IMR-90 (cell line): ENCODE measurements at regions of chrX and their contacts with region 1.

Region 1: GRCh38 chrX:100685284-100685996 is 41.4 kb downstream of the SRPX2 start:
- DNase-seq: peak; percentile 75
- ATAC-seq: peak; percentile 90
- H3K4me3 ChIP-seq: no peak overlapping the region
- H3K27ac ChIP-seq: no peak overlapping the region
- H3K4me1 ChIP-seq: peaks cover 2% of the 10 kb centered on the region
- H3K27me3 ChIP-seq: no peaks in the 10 kb centered on the region; the same call in 1 of the 2 replicates
- CTCF ChIP-seq: peak; percentile 96
- POLR2A ChIP-seq: no peak
- RAD21 ChIP-seq: peak; percentile 81

Region 2: GRCh38 chrX:100674705-100675104 is 10.7 kb before region 1 on chrX:
- CTCF ChIA-PET with region 1: interaction called, 14 read pairs
- POLR2A ChIA-PET with region 1: no interaction called
- dilution Hi-C with region 1: no loop called
- in situ Hi-C with region 1: no loop called
- intact Hi-C with region 1: no loop called
- DNase-seq: no peak
- ATAC-seq: no peak
- H3K4me3 ChIP-seq: no peak overlapping the region
- H3K27ac ChIP-seq: no peak overlapping the region
- H3K4me1 ChIP-seq: peaks cover 5% of the 10 kb centered on the region
- H3K27me3 ChIP-seq: no peaks in the 10 kb centered on the region; the same call in 1 of the 2 replicates
- CTCF ChIP-seq: no peak
- POLR2A ChIP-seq: no peak
- RAD21 ChIP-seq: no peak

Region 3: DNA sequence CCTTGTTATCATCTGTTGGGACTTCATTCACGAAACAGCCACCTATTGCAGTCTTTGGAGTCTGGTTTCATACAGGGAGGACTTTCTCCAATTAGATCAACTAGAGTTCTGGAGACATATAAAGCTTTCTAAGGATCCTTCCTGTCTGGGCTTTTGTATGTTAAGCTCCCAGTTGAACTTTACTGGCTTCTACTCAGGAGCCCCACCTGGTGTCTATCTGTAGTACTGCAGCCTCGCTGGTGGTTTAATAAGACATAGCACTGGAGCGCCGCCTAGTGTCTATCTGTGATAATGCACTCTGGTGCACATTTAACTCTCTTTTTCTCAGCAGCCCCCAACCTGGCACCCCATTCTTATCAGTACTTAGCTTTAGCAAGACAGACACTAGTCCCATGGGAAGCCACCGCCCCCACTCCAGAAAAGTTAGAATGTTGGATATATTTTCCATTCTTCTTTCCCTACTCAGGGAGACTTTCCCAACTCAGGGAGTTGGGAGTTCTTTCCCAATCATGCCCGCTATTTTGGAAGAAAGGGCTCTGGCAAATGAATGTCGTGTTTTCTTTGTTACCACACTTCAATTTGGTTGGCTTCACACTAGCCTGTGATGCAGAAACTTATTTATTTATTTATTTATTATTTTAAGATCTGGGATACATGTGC is 83.4 kb after region 1 on chrX:
- CTCF ChIA-PET with region 1: interaction called, 24 read pairs
- POLR2A ChIA-PET with region 1: no interaction called
- dilution Hi-C with region 1: no loop called
- in situ Hi-C with region 1: loop called (anchors 5 kb)
- intact Hi-C with region 1: loop called (anchors 1 kb)
- DNase-seq: peak; percentile 62
- ATAC-seq: peak; percentile 99
- H3K4me3 ChIP-seq: no peak overlapping the region
- H3K27ac ChIP-seq: no peak overlapping the region
- H3K4me1 ChIP-seq: no peaks in the 10 kb centered on the region
- H3K27me3 ChIP-seq: peaks cover 2% of the 10 kb centered on the region
- CTCF ChIP-seq: peak; percentile 100
- POLR2A ChIP-seq: no peak
- RAD21 ChIP-seq: peak; percentile 94

Region 4: DNA sequence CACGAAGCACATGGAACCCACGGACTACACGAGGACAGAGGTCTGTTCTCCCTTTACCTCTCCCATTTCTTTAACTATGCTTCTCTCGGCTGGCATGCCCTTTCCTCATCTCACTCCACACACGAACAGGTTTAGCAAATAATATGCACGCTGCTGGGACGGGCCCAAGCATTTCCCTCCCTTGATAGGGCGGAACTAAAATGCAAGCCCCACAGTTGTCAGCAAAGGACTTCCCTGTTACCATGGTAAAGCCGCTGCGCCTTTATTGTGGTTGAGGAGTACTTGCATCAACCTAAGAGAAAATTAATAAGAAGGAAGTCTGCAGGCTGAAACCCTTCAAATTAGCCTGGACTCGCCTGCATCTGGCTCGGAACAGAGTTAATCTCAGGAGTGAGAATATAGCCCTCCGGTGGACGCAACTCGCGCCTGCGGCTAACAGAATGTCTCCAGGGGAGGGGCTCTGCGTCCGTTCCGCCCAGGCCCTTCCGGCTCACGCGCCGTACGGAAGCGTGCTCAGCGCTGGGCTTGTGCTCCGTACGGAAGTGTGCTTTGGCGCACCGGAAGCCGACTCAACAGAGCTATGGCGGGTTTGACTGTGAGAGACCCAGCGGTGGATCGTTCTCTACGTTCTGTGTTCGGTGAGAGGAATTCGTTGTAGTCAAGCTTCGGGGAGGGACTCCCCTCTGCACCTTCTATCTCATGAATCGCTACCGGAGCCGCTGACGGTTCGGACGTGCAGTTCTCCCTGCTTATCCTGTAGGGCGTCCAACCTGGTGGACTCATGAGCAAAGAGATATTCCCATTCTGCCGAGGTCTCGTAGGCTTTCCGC is 134.6 kb after region 1 on chrX and contains the start of gene CSTF2:
- CTCF ChIA-PET with region 1: interaction called, 3 read pairs
- POLR2A ChIA-PET with region 1: no interaction called
- dilution Hi-C with region 1: no loop called
- in situ Hi-C with region 1: no loop called
- intact Hi-C with region 1: loop called (anchors 1 kb)
- DNase-seq: peak; percentile 79
- ATAC-seq: peak; percentile 100
- H3K4me3 ChIP-seq: peak within 1 kb of the TSS; percentile 95
- H3K27ac ChIP-seq: peak within 1 kb of the TSS; percentile 59
- H3K4me1 ChIP-seq: no peaks in the 10 kb centered on the region
- H3K27me3 ChIP-seq: peaks cover 4% of the 10 kb centered on the region; the same call in 1 of the 2 replicates
- CTCF ChIP-seq: no peak
- POLR2A ChIP-seq: no peak
- RAD21 ChIP-seq: 0 out of 2 replicates have a peak, but pooled peaks have one; percentile 1
- total RNA-seq, gene CSTF2: 27.8 and 30.3 TPM in 2 replicates

Region 5: DNA sequence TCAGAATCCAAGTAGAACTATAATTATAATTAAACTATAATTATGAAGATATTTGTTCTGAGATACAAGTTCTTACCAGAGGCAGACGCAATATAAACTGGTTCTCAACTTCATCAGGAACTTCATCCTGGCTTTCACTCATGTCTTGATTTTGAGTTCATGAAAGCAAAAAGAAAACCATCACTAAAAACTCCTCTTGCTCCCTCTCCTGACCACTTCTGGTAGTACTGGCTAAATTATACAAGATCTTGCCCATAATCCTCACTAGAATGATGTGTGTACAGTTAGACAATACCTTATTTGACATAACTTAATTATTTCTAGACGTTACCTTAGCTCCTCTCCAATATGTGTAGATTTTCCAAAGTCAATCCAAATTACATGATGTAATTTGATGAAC is 602.0 kb after region 1 on chrX:
- CTCF ChIA-PET with region 1: no interaction called
- POLR2A ChIA-PET with region 1: no interaction called
- dilution Hi-C with region 1: no loop called
- in situ Hi-C with region 1: no loop called
- intact Hi-C with region 1: loop called (anchors 10 kb)
- DNase-seq: peak; percentile 52
- ATAC-seq: peak; percentile 74
- H3K4me3 ChIP-seq: no peak overlapping the region
- H3K27ac ChIP-seq: no peak overlapping the region
- H3K4me1 ChIP-seq: no peaks in the 10 kb centered on the region
- H3K27me3 ChIP-seq: no peaks in the 10 kb centered on the region
- CTCF ChIP-seq: peak; percentile 62
- POLR2A ChIP-seq: no peak
- RAD21 ChIP-seq: peak; percentile 65